Activated naive CD4-positive, alpha-beta T cell treated with anti-CD3 and anti-CD28 coated beads, Interleukin-2, amount 10 ng/mL, durations not matched to agents 7 days and 5 days (primary cell): ENCODE measurements at regions of chr1 and their contacts with region 1.

Region 1: GRCh38 chr1:51897699-51898031 is 19.1 kb upstream of the NRDC start:
- DNase-seq: no peak
- H3K4me3 Mint-ChIP-seq: no peak overlapping the region
- H3K27ac Mint-ChIP-seq: no peak overlapping the region
- H3K4me1 Mint-ChIP-seq: peaks cover 4% of the 10 kb centered on the region
- H3K27me3 Mint-ChIP-seq: peaks cover 28% of the 10 kb centered on the region

Region 2: DNA sequence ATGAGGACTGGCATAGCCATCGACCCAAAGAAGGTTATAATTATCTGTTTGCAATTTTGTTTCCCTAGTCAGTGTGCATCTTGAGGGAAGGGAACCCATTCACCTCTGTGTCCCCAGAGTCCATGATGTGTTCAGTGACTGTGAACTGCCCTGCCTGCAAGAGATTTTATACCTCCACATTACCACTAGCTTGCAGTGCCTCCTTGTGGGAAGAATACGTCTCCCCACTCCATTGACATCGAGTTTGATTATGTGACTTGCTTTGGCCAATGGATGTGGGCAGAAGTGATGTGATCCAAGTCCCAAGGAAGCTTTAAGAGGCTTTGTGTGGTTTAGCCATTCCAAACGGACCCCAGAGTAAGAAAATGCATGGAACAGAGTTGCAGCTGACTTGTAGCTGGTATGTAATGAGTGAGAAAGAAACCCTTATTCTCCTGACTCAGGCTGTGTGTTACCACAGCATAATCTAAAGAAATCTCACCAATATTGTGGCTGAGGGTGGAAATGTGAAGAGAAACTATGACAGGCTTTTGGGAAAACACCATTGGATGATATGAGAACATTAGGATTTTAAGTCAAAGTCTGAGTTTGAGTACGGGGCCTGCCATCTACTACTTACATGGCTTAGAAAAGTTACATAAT is 28.6 kb after region 1 on chr1:
- CTCF ChIA-PET with region 1: interaction called, 12 read pairs
- DNase-seq: no peak
- H3K4me3 Mint-ChIP-seq: no peak overlapping the region
- H3K27ac Mint-ChIP-seq: no peak overlapping the region
- H3K4me1 Mint-ChIP-seq: no peaks in the 10 kb centered on the region
- H3K27me3 Mint-ChIP-seq: peaks cover 10% of the 10 kb centered on the region

Region 3: DNA sequence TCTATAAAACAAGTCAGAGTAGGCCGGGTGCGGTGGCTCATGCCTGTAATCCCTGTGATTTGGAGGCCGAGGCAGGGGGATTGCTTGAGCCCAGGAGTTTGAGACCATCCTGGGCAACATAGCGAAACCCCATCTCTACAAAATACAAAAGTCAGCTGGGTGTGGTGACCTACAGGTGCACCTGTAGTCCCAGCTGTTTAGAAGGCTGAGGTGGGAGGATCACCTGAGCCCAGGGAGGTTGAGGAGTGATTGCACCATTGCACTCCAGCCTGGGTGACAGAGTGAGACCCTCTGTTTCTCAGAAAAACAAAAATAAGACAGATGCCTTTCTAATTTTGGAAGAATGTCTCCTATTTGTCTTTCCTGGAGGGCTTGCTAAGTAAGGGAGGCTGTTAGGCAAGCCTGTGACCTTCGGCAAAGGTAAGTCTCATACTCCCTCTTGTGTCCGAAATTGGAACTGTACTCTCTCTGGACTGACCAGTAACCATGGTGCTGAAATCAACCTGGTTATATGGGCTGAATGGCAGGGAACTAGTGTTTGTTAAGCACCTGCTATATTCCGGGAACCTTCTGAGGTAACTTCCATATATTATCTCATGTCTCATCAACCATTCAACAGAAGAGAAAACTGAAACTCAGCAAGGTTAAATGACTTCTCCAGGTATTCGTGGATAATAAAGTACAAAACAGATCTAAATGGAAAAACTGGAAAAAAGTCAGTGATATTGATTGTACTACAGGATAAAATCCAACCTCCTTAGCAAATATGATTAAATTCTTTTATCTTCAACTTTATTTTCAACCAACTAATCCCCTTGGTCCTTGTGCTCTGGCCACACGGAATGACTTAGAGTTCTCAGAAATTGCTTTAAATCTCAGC is 104.6 kb after region 1 on chr1:
- CTCF ChIA-PET with region 1: interaction called, 17 read pairs
- DNase-seq: peak; percentile 52
- H3K4me3 Mint-ChIP-seq: no peak overlapping the region
- H3K27ac Mint-ChIP-seq: no peak overlapping the region
- H3K4me1 Mint-ChIP-seq: no peaks in the 10 kb centered on the region
- H3K27me3 Mint-ChIP-seq: peaks cover 30% of the 10 kb centered on the region